ENCODE measurements at regions of chr5 and their contacts with region 1.

Region 1: DNA sequence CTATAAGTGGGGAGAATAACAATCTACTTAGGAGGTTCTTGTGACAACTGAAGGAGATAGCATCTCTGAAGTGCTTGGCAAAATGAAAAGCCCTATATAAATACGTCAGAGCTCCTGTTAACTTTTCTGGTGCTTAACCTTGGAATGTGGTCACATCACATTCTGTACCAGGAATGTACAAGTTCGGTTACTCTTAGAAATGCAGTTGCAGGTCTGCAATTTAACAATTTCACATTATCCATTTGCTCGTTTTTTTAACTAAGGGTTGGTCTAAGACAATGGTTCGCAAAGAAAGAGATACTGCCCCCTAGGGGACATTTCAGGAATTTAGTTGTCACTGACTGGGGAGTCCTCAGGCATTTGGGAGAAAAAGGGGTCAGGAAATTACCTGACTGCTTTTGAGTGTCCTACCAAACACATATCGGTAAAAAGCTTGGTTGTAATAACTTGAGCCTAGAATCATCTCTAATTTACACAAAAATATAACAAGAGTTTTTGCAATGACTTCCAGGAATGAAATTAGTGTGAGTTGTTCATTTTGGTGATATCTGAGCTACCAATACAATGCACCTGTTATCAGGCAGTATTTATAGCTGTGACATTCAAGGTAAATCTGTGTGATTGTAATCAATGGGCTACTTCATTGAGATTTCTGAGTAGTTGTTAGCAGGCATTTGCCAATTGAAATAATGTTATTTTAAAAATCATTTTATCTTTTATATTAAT is 5.4 kb upstream of the HBEGF start:
- DNase-seq: peak; percentile 68
- ATAC-seq: peak; percentile 91
- H3K4me3 Mint-ChIP-seq: no peak overlapping the region
- H3K27ac Mint-ChIP-seq: no peak overlapping the region
- H3K4me1 Mint-ChIP-seq: peaks cover 28% of the 10 kb centered on the region
- H3K27me3 Mint-ChIP-seq: peaks cover 19% of the 10 kb centered on the region

Region 2: GRCh38 chr5:139822553-139823425 is 529.0 kb before region 1 on chr5:
- CTCF ChIA-PET with region 1: no interaction called
- DNase-seq: no peak
- ATAC-seq: no peak
- H3K4me3 Mint-ChIP-seq: no peak overlapping the region
- H3K27ac Mint-ChIP-seq: no peak overlapping the region
- H3K4me1 Mint-ChIP-seq: no peaks in the 10 kb centered on the region
- H3K27me3 Mint-ChIP-seq: peaks cover 11% of the 10 kb centered on the region

Region 3: DNA sequence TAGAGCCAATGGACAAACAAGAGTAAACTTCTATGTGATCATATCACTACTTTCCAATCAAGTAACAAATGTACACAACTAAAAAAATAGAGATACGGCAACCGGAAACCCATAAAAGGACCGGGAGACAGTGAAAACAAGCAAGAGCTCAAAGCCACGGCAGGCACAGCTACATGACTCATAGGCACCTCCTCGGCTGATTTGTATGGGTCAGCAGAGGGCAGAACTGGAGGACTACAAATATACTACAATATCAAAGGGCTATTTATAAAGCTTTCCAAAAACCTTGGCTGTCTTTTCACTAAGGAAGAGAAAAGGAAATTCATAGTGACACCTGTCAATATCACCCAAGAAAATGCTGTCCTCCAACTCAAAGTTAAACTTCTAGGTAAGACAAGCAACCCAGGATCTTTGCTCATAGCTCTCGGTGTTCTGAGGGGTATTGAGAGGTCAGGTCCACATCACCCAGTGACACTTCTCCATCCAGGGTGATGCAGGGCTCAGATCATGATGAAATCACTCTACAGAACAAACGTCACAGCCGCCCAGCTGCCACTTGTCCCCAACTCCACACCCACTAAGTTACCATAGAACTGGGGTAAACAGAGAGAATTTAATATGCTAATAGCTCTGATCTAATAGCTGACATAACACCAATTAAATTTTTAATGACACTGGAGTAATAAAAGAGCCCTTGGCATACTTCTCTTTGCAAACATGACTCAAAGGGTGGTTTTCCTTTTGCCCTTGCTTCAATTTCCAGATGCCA is 90.2 kb before region 1 on chr5:
- CTCF ChIA-PET with region 1: interaction called, 19 read pairs
- DNase-seq: no peak
- ATAC-seq: peak; percentile 72
- H3K4me3 Mint-ChIP-seq: no peak overlapping the region
- H3K27ac Mint-ChIP-seq: peak overlapping the region; percentile 2
- H3K4me1 Mint-ChIP-seq: peaks cover 63% of the 10 kb centered on the region
- H3K27me3 Mint-ChIP-seq: no peaks in the 10 kb centered on the region

Region 4: DNA sequence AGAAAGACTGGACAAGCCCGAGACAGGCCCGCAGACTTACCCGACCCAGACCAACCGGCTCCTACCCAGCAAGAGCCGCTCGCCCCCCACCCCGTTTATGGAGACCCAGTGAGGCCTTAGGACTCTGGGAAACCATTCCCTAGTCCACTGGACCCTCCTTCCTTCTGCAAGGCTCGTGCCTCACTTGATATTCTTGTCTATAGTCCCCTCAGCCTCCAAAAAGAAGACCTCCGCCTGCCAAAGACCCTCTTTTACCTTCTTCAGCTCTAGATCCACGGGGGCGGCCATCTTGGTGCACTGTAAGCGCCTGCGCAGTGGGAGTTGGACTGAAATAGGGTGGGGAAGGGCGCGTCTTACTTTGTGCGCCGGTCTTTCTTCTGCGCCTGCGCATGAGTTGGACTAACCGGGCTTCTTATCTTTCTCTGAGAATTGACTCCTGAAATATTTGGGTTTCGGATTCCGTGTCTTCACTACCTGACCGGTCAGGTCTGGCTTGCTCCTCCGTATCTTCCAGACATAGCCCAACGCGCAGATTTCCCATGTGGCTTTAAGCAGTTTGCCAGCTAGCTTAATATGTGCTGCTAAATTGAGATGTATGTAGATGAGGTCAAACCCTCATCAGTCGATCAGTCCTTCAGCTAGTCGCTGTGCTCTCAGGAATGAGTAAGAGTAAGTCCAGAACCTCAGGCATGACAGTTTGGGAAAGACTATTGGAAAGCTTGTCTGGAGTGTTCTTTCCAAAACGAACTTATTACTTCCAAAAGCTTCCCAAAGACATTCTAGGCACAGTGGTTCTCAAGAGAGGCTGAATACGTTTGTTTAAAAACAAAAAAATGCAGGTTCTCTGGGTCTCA is 48.8 kb before region 1 on chr5 and contains the start of gene PFDN1:
- CTCF ChIA-PET with region 1: interaction called, 16 read pairs
- DNase-seq: peak; percentile 97
- ATAC-seq: peak; percentile 100
- H3K4me3 Mint-ChIP-seq: peak within 1 kb of the TSS; percentile 90
- H3K27ac Mint-ChIP-seq: peak within 1 kb of the TSS; percentile 94
- H3K4me1 Mint-ChIP-seq: peaks cover 34% of the 10 kb centered on the region
- H3K27me3 Mint-ChIP-seq: peaks cover 7% of the 10 kb centered on the region
- total RNA-seq, gene PFDN1: 48.9 to 57.5 TPM

Measured in activated CD8-positive, alpha-beta memory T cell treated with anti-CD3 and anti-CD28 coated beads, Interleukin-2, amount 10 ng/mL, durations not matched to agents 7 days and 5 days (primary cell).